GM10248 (cell line): ENCODE measurements at regions of chr15 and their contacts with region 1.

Region 1: GRCh38 chr15:50424066-50424890 is at the start of gene USP8:
- DNase-seq: peak; percentile 94
- CTCF ChIP-seq: no peak

Region 2: GRCh38 chr15:50113187-50113505 is 311.1 kb before region 1 on chr15:
- CTCF ChIA-PET with region 1: no interaction called
- POLR2A ChIA-PET with region 1: interaction called, 14 read pairs
- DNase-seq: no peak
- CTCF ChIP-seq: no peak

Region 3: DNA sequence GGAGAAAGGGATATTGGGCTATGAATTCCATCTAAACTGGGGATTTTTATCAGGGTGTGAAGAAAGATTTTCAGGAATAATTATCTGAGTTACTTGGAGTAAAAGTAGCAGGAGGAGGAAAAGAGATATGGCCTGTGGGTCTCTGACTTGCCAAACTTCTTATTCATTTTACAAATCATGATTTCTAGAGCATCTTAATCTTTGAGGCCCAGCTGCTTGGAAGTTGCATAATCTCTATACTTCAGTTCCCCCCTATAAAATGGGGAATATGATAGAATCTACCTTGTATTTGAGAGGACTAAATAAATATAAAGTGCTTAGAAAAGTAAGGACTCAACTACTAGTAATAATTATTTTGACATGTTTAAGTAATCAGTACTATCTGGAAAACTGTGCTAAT is 58.3 kb before region 1 on chr15:
- CTCF ChIA-PET with region 1: no interaction called
- POLR2A ChIA-PET with region 1: no interaction called
- DNase-seq: no peak
- CTCF ChIP-seq: no peak

Region 4: GRCh38 chr15:50440932-50441331 is 16.7 kb after region 1 on chr15:
- CTCF ChIA-PET with region 1: no interaction called
- POLR2A ChIA-PET with region 1: no interaction called
- DNase-seq: no peak
- CTCF ChIP-seq: no peak